ENCODE measurements at regions of chr6 and their contacts with region 1.

Region 1: DNA sequence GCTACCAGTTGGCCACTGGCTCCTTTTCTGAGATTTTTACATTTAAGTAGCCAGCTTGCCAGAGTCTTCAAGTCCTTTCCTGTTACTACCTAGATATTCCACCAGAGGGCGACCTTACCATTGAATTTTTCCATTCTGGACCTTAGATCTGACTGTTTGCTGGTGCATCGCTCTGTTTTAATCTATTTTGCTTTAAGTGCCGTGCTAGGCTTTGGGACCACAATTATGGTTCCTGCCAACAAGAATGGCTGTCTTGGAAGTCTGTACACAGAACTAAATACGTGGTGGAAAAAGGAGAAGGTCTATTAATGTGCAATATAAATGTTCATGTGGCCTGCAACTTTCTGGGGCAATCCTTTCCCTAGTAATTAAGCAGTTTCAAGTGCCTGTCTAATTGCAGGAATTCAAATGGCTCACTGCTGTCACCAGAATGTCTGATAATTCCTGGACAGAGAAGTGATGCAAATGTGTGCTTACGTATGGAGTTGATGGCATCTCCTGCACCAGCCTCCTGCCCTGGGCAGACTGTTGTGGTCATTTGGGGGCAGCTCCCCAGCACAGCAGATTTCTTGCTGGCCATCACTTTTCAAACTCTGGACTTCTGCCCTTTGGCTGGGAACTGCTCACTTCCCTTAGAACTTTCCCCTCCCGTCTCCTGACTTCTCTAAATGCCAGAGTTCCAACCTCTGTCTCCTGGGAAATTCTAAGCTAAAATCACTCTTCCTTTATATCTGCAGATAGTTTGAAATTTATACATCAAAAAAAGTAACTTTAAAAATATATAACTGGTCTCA is 5.6 kb upstream of the HLA-DOA start:
- DNase-seq: peak; percentile 62
- ATAC-seq: peak; percentile 82
- H3K4me3 ChIP-seq: no peak overlapping the region
- H3K27ac ChIP-seq: no peak overlapping the region
- H3K4me1 ChIP-seq: no peaks in the 10 kb centered on the region
- H3K27me3 ChIP-seq: peaks cover 19% of the 10 kb centered on the region
- CTCF ChIP-seq: peak; percentile 84

Region 2: GRCh38 chr6:33147807-33148666 is 133.0 kb after region 1 on chr6:
- CTCF ChIA-PET with region 1: no interaction called
- POLR2A ChIA-PET with region 1: no interaction called
- in situ Hi-C with region 1: no loop called
- intact Hi-C with region 1: loop called (anchors 5 kb)
- DNase-seq: no peak
- ATAC-seq: peak; percentile 84
- H3K4me3 ChIP-seq: no peak overlapping the region
- H3K27ac ChIP-seq: no peak overlapping the region
- H3K4me1 ChIP-seq: no peaks in the 10 kb centered on the region
- H3K27me3 ChIP-seq: peaks cover 3% of the 10 kb centered on the region
- CTCF ChIP-seq: peak; percentile 80; the same call in 1 of the 2 replicates

Region 3: GRCh38 chr6:33172688-33173534 is 157.9 kb after region 1 on chr6:
- CTCF ChIA-PET with region 1: no interaction called
- POLR2A ChIA-PET with region 1: no interaction called
- in situ Hi-C with region 1: no loop called
- intact Hi-C with region 1: loop called (anchors 10 kb)
- DNase-seq: no peak
- ATAC-seq: peak; percentile 79
- H3K4me3 ChIP-seq: no peak overlapping the region
- H3K27ac ChIP-seq: no peak overlapping the region
- H3K4me1 ChIP-seq: peaks cover 6% of the 10 kb centered on the region
- H3K27me3 ChIP-seq: no peaks in the 10 kb centered on the region
- CTCF ChIP-seq: peak; percentile 91

Region 4: GRCh38 chr6:33200219-33201146 is 185.4 kb after region 1 on chr6 and contains the starts of genes RXRB and SLC39A7:
- CTCF ChIA-PET with region 1: no interaction called
- POLR2A ChIA-PET with region 1: interaction called, 15 read pairs
- in situ Hi-C with region 1: no loop called
- intact Hi-C with region 1: no loop called
- DNase-seq: peak; percentile 97
- ATAC-seq: peak; percentile 78
- H3K4me3 ChIP-seq: peak within 1 kb of the TSS; percentile 68 to 100
- H3K27ac ChIP-seq: peak within 1 kb of the TSS; percentile 93
- H3K4me1 ChIP-seq: peaks cover 37% of the 10 kb centered on the region
- H3K27me3 ChIP-seq: no peaks in the 10 kb centered on the region
- CTCF ChIP-seq: no peak
- total RNA-seq, gene RXRB: 27.4 TPM
- total RNA-seq, gene SLC39A7: 135 TPM

Region 5: DNA sequence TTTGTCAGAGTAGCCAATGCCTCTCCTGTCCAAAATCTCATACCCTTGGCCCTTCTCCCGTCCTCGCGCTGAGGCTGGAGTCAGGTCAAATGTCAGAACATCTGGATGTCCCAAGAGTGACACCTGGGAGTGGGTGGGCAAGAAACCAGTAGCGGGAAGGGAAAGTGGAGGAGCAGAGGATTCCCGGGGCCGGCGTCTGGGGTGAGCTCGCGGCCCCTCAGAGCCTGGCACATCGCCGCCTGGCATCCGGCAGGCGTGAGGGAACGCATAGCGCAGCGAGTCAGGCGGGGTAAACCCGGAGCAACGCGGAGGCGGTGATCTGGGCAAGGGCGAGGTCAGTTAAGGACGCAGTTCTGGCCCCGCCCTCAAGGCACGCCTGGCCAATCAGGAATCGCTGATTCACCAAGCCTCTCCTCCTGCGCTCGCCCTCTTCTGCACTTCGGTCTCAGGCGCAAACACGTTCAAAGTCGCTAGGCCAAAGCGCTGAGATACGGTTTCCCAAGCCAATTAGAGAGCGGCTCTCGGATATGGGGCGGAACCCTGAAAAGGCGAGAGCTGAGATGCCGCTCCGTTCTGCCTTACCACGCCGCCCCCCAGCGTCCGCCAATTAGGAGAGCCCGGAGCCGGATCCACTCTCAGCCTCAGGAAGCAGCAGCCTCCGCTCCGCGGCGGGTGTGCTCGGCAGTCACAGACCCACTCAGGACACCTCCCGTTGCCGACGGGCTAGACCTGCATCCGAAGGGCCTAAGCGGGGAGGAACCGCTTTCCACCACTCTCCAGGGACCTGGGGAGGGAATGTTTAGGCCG is 234.1 kb after region 1 on chr6:
- CTCF ChIA-PET with region 1: no interaction called
- POLR2A ChIA-PET with region 1: no interaction called
- in situ Hi-C with region 1: no loop called
- intact Hi-C with region 1: loop called (anchors 10 kb)
- DNase-seq: peak; percentile 97
- ATAC-seq: peak; percentile 93
- H3K4me3 ChIP-seq: peak overlapping the region; percentile 67 to 82
- H3K27ac ChIP-seq: peak overlapping the region; percentile 98
- H3K4me1 ChIP-seq: peaks cover 14% of the 10 kb centered on the region
- H3K27me3 ChIP-seq: no peaks in the 10 kb centered on the region
- CTCF ChIP-seq: no peak

Measured in Panc1 (cell line).